ENCODE measurements at regions of chr2 and their contacts with region 1.

Region 1: DNA sequence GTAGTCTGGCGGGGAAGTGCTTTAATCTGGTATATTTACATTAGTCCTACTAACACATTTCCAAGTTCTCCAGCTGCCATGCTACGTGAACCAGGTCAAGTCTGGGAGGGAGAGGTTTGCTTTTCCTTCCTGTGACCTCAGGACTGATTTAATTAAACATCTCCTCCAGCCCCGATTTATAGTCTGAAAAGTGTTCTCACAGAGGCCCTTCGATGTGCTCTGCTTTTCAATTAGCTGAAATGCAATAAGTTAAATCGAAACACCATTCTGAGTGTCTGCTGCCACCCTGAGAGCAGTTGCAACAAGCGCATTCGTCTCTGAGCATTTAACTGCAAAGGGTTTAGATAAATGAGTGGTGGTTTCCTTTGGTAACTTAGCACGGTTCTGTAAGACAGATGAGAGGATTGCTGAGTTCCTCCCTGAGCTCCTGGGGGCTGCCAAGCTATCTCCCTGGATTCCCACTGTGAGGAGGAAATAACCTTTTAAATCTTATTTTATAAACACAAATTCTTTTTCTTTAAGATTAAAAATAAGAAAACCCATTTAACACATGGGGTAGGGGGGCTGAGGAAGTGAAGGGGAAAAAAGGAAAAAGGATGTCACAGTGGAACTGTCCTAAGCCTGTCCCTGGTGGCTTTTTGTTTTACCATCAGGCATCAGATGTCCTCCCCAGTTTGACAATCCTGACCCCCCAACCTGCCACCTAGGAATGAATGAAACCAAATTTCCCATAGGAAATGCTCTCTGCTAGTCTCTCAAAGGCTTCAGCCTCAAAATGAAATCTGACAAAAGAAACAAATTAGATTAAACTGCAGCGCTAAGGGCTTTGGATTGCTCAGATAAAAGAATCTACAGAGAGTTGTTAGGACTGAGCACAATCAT is 56.5 kb upstream of the CREB1 start:
- DNase-seq: peak; percentile 86
- ATAC-seq: peak; percentile 75
- H3K4me3 ChIP-seq: no peak overlapping the region
- H3K27ac ChIP-seq: peak overlapping the region; percentile 1; the same call in 1 of the 2 replicates
- H3K4me1 ChIP-seq: peaks cover 25% of the 10 kb centered on the region
- H3K27me3 ChIP-seq: no peaks in the 10 kb centered on the region
- CTCF ChIP-seq: peak; percentile 92

Region 2: DNA sequence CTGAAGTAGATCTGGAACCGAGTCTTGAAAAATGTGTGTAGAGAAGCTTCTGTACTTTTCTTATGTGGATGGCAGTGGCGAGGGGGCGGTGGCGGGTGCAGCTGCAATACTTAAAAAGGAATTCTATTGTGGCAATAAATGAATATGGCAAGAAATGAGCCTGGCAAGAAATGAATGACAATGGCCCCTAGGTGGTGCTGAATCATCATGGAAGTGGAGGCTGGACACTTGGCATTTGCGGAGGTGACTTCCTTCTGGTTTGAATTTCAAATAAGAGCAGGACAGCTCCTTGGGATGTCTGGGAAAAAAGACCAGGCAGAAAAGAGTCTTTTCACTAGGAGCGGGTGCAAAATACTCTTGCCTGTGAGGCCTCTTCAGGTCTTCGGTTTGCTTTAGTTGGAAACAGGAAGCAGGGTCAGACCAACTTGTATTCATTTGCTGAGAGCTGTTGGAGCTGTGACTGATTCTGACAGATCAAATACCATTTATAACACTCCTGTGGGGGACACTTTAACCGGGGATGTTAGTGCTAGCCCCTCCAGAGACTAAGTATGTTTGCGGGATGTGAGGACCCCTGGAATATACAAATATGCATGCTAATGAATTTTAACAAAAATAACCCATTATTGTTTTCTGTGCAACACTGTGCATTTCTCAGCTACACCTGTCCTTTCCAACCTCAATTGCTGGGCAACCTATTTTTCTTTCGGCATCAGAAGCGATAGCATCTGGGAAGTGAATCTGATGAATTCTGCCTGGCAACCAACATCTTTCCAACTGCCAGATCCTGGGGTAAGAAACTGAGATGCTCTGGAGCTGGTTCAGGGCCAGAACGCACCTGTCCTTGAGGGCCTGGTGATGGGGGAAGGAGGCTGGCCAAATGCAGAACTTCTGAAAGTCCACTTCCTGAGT is 672.5 kb before region 1 on chr2:
- CTCF ChIA-PET with region 1: interaction called, 3 read pairs
- POLR2A ChIA-PET with region 1: no interaction called
- intact Hi-C with region 1: loop called (anchors 1 kb)
- DNase-seq: peak; percentile 82
- ATAC-seq: peak; percentile 84
- H3K4me3 ChIP-seq: no peak overlapping the region
- H3K27ac ChIP-seq: no peak overlapping the region
- H3K4me1 ChIP-seq: 0 out of 2 replicates have a peak, but pooled peaks cover 6% of the 10 kb centered on the region
- H3K27me3 ChIP-seq: no peaks in the 10 kb centered on the region
- CTCF ChIP-seq: peak; percentile 89

Region 3: DNA sequence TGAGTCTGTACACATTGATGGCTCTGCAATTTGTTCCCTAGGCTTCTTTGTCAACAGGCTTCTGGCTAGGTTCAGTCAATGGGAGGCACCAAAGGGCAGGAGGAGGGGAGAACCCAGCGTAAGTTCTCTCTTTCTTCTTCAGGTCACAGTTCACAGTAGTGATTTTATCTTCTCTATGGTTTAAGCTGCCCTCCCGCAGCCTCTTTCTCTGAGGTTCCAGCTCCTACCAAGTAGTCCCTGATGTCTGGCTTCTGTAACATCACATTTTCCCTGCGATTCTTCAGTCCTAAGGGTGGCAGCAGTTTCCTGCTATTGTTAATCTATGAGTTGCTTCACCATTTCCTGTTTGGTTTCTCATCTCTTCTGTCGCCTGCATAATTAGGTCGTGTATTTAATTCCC is 426.6 kb before region 1 on chr2:
- CTCF ChIA-PET with region 1: no interaction called
- POLR2A ChIA-PET with region 1: no interaction called
- intact Hi-C with region 1: loop called (anchors 1 kb)
- DNase-seq: peak; percentile 33
- ATAC-seq: peak; percentile 57; the same call in 1 of the 2 replicates
- H3K4me3 ChIP-seq: no peak overlapping the region
- H3K27ac ChIP-seq: no peak overlapping the region
- H3K4me1 ChIP-seq: no peaks in the 10 kb centered on the region
- H3K27me3 ChIP-seq: no peaks in the 10 kb centered on the region
- CTCF ChIP-seq: peak; percentile 33; the same call in 1 of the 2 replicates

Region 4: GRCh38 chr2:207166039-207166348 is 307.3 kb before region 1 on chr2:
- CTCF ChIA-PET with region 1: interaction called, 3 read pairs
- POLR2A ChIA-PET with region 1: no interaction called
- intact Hi-C with region 1: loop called (anchors 1 kb)
- DNase-seq: peak; percentile 98
- ATAC-seq: peak; percentile 81
- H3K4me3 ChIP-seq: peak overlapping the region; percentile 94
- H3K27ac ChIP-seq: peak overlapping the region; percentile 81
- H3K4me1 ChIP-seq: peaks cover 40% of the 10 kb centered on the region
- H3K27me3 ChIP-seq: no peaks in the 10 kb centered on the region
- CTCF ChIP-seq: no peak

Region 5: DNA sequence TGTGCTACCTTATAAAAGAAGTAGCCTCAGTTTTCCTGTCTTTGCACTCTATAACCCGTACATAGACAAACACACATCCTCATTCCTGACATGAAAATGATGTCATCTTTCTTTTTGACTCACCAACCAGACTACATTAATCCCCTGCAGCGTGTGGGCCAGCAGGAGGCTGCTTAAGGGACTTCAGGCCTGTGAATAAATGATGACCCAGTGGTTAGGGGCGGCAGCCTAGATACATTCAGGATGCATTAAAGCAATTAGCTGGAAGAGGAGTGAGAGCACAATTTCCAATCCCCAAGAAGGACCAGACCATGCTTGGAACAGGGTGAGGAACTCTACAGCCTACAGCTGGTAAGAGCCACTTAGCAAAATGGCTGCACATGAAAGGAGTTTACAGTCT is 250.2 kb before region 1 on chr2:
- CTCF ChIA-PET with region 1: no interaction called
- POLR2A ChIA-PET with region 1: no interaction called
- intact Hi-C with region 1: loop called (anchors 5 kb)
- DNase-seq: peak; percentile 41
- ATAC-seq: no peak
- H3K4me3 ChIP-seq: no peak overlapping the region
- H3K27ac ChIP-seq: no peak overlapping the region
- H3K4me1 ChIP-seq: peaks cover 26% of the 10 kb centered on the region
- H3K27me3 ChIP-seq: no peaks in the 10 kb centered on the region
- CTCF ChIP-seq: no peak

Region 6: DNA sequence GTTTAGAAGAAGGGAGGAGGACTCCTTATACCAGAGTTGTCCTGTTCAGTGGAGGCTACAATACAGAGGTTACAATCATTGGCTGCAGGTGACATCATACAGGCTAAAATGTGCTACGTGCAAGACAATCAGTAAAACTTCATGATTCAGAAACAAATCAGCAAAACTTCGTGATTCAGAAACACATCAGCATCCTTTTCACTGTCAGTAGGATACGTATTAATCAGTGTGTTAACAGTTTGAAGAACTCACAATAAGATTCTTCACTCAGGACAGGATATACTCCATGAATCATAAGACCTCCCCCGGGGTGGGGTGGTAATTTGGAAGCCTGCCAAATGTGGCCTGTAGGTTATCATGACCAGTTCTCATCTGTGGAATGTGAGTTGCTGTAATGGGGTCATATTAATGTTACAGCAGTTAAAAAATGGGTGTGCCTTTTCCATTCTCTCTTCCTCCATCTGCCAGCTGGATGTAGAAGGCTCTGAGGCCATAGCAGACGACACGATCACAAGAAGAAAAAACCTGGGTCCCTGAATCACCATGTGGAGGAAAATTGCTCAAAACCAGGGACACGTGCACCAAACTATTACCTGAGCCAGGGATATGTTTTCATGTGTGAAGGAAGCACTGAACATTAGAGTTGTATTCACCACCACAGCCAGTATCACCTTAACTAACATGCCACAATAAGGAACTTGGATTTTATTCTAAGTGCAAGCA is 78.3 kb before region 1 on chr2:
- CTCF ChIA-PET with region 1: no interaction called
- POLR2A ChIA-PET with region 1: no interaction called
- intact Hi-C with region 1: loop called (anchors 1 kb)
- DNase-seq: peak; percentile 99
- ATAC-seq: peak; percentile 86
- H3K4me3 ChIP-seq: peak overlapping the region; percentile 40
- H3K27ac ChIP-seq: peak overlapping the region; percentile 99
- H3K4me1 ChIP-seq: peaks cover 23% of the 10 kb centered on the region
- H3K27me3 ChIP-seq: no peaks in the 10 kb centered on the region
- CTCF ChIP-seq: no peak

Region 7: GRCh38 chr2:207432453-207432852 is 40.8 kb before region 1 on chr2:
- CTCF ChIA-PET with region 1: no interaction called
- POLR2A ChIA-PET with region 1: no interaction called
- intact Hi-C with region 1: no loop called
- DNase-seq: no peak
- ATAC-seq: no peak
- H3K4me3 ChIP-seq: no peak overlapping the region
- H3K27ac ChIP-seq: no peak overlapping the region
- H3K4me1 ChIP-seq: no peaks in the 10 kb centered on the region
- H3K27me3 ChIP-seq: no peaks in the 10 kb centered on the region
- CTCF ChIP-seq: no peak

Region 8: GRCh38 chr2:207734264-207734635 is 261.0 kb after region 1 on chr2:
- CTCF ChIA-PET with region 1: no interaction called
- POLR2A ChIA-PET with region 1: no interaction called
- intact Hi-C with region 1: loop called (anchors 5 kb)
- DNase-seq: peak; percentile 70
- ATAC-seq: peak; percentile 95
- H3K4me3 ChIP-seq: no peak overlapping the region
- H3K27ac ChIP-seq: no peak overlapping the region
- H3K4me1 ChIP-seq: no peaks in the 10 kb centered on the region
- H3K27me3 ChIP-seq: no peaks in the 10 kb centered on the region
- CTCF ChIP-seq: peak; percentile 76